IMR-90 (cell line): ENCODE measurements at regions of chr20 and their contacts with region 1.

Region 1: DNA sequence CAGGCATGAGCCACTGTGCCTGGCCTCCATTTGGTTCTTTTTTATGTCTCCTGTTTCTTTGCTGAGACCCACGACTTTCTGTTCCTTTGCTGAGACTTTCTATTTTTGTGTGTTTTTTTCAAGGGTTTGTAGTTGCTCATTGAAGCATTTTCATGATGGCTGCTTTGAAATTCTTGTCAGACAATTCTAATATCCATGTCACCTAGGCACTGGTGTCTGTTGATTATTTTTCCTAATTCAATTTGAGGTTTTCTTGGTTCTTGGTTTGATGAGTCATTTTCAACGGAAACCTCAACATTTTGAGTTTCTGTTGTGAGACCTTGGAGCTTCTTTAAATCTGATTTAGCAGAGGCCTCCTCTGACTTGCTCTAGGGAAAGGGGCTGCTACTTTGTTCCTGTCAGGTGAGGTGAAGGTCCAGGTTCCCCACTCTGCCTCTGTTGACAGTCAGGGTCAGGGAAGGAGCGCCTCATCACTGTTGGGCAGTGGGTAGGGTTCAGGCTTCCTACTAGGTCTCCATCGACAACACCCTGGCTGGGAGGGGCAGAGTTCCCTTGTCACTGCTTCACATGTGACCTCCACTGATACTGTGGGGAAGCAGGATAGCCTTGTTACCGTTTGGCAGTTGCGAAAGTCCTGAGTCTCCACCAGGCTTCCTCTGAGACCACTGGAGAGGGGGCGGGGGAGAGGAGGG is 67.2 kb upstream of the RNF24 start:
- DNase-seq: peak; percentile 82
- ATAC-seq: peak; percentile 40
- H3K4me3 ChIP-seq: peak overlapping the region; percentile 12; the same call in 1 of the 2 replicates
- H3K27ac ChIP-seq: peak overlapping the region; percentile 97
- H3K4me1 ChIP-seq: peaks cover 22% of the 10 kb centered on the region
- H3K27me3 ChIP-seq: no peaks in the 10 kb centered on the region
- CTCF ChIP-seq: no peak
- POLR2A ChIP-seq: no peak
- RAD21 ChIP-seq: no peak

Region 2: DNA sequence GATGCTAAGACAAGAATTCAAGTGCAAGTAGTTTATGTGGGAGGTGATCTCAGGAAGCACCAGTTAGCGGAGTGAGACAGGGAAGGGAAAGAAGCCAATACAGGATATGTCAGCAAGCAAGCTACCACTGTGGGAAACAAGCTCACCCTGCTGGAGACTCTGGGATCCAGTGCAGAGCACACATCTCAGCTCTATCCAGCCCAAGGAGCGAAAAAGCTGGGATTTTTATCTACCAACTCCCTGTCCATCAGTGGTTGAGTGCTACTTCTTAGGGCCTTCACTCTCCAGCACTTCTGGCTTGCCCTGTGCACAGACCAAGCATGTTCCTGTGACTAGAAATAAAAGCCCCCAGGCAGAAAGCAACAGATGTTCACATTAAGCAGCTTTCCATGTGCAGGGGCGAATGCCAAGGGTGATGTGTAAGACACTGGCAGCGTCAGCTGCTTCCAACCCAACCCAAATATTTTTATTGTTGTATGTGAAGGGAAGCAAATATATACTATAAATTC is 56.4 kb before region 1 on chr20:
- CTCF ChIA-PET with region 1: no interaction called
- POLR2A ChIA-PET with region 1: no interaction called
- dilution Hi-C with region 1: loop called (anchors 10 kb)
- in situ Hi-C with region 1: no loop called
- intact Hi-C with region 1: no loop called
- DNase-seq: peak; percentile 88
- ATAC-seq: peak; percentile 87
- H3K4me3 ChIP-seq: no peak overlapping the region
- H3K27ac ChIP-seq: no peak overlapping the region
- H3K4me1 ChIP-seq: peaks cover 7% of the 10 kb centered on the region
- H3K27me3 ChIP-seq: no peaks in the 10 kb centered on the region; the same call in 1 of the 2 replicates
- CTCF ChIP-seq: peak; percentile 52
- POLR2A ChIP-seq: no peak
- RAD21 ChIP-seq: peak; percentile 49